ENCODE measurements at regions of chr11 and their contacts with region 1.

Region 1: GRCh38 chr11:44057340-44057739 is 8.7 kb upstream of the ACCS start:
- DNase-seq: peak; percentile 11
- H3K4me3 ChIP-seq: no peak overlapping the region
- H3K27ac ChIP-seq: no peak overlapping the region
- H3K4me1 ChIP-seq: no peaks in the 10 kb centered on the region
- H3K27me3 ChIP-seq: 0 out of 2 replicates have a peak, but pooled peaks cover 4% of the 10 kb centered on the region

Region 2: DNA sequence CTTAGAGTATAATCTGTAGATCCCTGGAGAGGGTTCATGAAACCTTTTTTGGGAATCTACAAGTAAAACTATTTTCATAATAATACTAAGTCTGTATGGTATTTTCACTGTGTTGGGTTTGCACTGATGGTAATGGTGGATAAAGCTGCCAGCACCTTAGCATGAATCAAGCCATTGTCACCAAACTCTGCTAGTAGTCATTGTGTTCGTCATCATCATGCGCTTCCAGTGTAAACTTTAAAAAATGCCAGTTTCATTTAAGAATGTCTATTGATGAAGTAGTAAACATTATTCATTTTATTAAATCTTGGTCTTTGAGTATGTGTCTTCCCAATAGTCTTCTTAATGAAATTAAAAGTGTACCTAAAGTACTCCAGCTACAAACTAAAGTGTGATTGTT is 161.7 kb before region 1 on chr11:
- in situ Hi-C with region 1: loop called (anchors 10 kb)
- DNase-seq: peak; percentile 20
- H3K4me3 ChIP-seq: no peak overlapping the region
- H3K27ac ChIP-seq: no peak overlapping the region
- H3K4me1 ChIP-seq: no peaks in the 10 kb centered on the region
- H3K27me3 ChIP-seq: no peaks in the 10 kb centered on the region

Region 3: GRCh38 chr11:44130751-44131150 is 73.4 kb after region 1 on chr11:
- in situ Hi-C with region 1: no loop called
- DNase-seq: no peak
- H3K4me3 ChIP-seq: no peak overlapping the region
- H3K27ac ChIP-seq: no peak overlapping the region
- H3K4me1 ChIP-seq: no peaks in the 10 kb centered on the region
- H3K27me3 ChIP-seq: no peaks in the 10 kb centered on the region